BJ (cell line): ENCODE measurements at regions of chr5 and their contacts with region 1.

Region 1: DNA sequence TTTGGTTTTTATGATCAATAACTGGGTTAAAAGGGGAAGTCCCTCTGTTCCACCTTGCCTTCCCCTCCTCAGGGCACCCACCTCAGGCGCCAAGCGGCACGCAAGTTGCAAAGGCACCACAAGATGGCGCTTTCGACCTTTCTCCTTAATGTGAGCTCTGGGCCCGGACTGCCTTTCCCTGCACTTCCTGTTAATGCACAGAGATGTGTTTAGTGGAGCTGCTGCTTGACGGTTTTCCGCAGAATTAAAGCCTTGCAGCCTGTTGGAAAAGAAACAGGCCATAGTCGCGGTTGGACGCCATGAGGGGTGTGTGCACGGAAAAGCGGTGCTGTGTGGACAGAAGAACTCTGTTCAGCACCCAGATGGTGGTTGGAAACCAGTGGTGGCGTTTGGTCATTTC is 17.9 kb downstream of the CXCL14 start:
- DNase-seq: no peak
- H3K4me3 ChIP-seq: no peak overlapping the region
- H3K27me3 ChIP-seq: peaks cover 7% of the 10 kb centered on the region; the same call in 1 of the 2 replicates
- CTCF ChIP-seq: peak; percentile 92

Region 2: DNA sequence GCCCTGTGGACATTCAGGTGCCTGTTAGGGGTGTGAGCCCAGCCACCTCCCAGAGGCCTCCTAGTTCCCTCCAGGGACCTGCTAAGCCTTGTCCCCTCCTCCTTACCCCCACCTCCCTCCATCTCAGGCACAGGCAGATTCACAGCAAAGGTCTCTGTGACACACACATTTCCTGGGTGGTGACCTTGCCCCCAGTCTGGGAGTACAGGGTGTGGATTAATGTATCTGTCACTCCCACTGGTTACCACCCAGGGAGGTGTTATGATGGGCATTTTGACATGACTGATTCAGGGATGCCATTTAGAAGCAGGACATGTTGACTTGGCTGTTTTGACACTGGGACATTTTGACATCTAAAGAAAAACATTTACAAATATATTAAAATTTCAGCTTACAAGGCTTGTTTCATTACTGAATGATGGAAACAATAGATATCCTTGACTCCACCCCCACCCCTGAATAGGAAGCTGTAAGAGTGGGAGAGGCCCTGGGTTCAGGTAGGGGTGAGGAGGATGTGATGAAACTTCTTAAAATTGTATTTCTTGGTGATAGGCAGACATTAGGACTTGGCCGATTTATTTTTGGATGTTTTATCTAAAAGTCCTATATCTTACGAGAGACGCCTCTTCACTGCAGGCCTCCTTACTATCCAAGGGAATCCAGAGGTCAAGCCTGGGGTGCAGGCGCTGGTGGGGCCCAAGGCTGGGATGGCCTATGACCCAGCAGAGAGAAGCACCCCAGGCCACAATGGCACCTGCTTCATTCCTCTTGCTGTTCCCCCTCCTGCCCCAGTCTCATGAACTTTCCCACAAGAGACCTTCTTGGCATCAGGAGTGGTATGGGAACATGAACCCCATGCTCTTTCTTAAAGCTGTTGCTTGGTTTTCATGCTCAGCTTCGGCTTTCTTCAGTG is 263.7 kb before region 1 on chr5:
- CTCF ChIA-PET with region 1: no interaction called
- POLR2A ChIA-PET with region 1: no interaction called
- DNase-seq: no peak
- H3K4me3 ChIP-seq: no peak overlapping the region
- H3K27me3 ChIP-seq: no peaks in the 10 kb centered on the region
- CTCF ChIP-seq: no peak

Region 3: GRCh38 chr5:135578685-135579341 is 18.0 kb after region 1 on chr5 and contains the start of gene CXCL14:
- CTCF ChIA-PET with region 1: interaction called, 42 read pairs
- POLR2A ChIA-PET with region 1: interaction called, 5 read pairs
- DNase-seq: no peak
- H3K4me3 ChIP-seq: peak within 1 kb of the TSS; percentile 41
- H3K27me3 ChIP-seq: peaks cover 25% of the 10 kb centered on the region
- CTCF ChIP-seq: no peak
- polyA plus RNA-seq, gene CXCL14: 1.5 and 1.6 TPM in 2 replicates

Region 4: DNA sequence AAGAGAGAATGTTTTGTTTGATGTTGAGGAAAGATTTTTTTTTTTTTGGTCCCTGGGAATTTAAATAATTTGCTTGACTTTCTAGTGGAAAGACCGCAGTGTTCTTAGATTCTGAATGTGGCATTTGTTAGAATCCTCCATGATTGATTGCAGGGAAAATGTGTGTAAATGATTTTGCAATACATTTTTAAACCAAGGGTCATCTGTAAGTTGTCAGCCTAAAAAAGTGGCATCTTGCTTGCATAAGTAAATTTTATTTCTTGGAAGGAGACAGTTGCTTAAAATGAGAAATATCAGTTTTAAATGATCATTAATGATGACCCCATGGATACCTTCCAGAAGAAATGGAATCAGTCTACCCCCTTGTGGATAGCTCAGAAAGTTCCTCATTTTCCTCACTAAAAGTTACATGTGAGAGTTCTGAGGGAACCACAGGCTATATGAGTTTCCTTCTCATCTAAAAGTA is 168.5 kb after region 1 on chr5:
- CTCF ChIA-PET with region 1: interaction called, 24 read pairs
- POLR2A ChIA-PET with region 1: no interaction called
- DNase-seq: no peak
- H3K4me3 ChIP-seq: no peak overlapping the region
- H3K27me3 ChIP-seq: no peaks in the 10 kb centered on the region
- CTCF ChIP-seq: peak; percentile 12; the same call in 1 of the 2 replicates

Region 5: DNA sequence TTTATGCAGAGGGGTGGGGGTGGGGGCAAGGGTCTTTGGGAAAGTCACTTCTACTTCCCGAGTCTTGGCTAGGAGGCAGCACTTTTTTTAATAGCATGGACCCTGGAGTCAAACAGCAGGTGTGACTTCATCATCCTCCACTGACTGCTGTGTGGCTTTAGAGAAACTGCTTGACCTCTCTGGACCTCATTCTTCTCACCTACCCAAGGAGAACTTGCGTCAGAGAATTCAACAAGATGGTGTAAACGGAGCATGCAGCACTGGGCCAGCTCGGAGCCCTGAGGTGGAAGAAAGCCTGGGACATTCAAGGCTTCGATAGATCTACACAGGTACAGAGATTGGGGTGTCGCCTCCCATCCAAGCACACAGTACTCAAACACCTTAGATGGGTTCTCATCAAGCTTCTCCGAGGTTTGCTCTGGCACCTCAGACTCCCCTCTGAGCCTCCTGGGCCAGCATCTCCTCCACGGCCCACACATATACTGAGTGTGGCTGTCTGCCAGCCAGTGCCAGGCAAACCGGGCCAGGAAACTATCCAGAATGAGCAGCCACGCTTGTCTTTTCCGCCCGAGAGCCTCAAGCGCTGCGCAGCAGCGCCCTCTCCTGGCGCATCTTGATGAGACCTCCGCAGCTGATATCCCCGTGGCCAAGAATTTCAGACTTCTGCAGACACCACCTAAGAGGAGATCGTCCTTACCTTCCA is 269.0 kb after region 1 on chr5:
- CTCF ChIA-PET with region 1: interaction called, 274 read pairs
- POLR2A ChIA-PET with region 1: interaction called, 4 read pairs
- DNase-seq: no peak
- H3K4me3 ChIP-seq: no peak overlapping the region
- H3K27me3 ChIP-seq: peaks cover 14% of the 10 kb centered on the region
- CTCF ChIP-seq: peak; percentile 82